Heart left ventricle (tissue), 16 donors: ENCODE measurements at regions of chr10 and their contacts with region 1.

Region 1: DNA sequence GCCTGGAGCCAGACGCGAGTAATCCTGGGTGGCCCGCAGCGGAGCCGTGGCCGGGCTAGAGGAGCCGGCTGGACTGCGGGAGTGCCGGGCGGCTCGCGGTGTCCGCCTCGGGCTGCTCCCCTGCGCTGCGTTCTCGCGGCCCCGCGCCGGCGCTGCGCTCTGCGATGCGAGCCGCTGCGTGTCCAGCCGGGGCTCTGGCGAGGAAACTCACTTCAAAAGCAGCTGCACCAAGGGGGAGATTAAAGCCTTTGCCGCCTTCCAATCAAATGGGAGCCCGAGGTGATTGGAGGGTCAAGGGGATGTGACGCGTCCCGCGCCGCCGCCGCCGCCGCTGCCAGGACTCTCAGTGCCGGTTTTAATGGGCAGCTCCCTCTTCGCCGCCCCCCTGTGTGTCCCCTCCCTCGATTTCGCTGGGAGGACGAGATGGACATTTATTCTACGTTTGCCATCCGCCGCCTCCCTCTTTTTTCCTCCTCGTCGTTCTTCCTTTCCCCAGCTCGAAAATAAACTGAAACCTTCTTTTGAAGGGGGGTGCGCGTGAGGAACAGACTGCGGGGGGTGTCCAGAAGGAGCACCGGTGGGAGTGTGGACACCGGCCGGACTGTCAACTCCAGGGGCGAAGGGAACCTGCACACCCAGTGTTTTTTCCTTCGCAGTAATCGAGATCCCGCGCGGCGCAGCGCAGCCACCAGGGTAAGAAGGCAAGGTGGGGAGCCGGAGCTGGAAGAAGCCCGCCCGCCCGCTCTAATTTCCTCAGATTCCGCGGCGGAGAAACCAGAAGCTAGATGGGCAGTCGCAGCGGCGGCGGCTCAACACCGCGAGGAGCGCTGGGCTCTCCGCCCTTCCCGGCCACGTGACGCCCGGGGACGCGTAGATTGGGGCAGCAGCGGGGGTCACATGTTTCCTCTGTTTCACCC is at the start of gene ZNF503:
- DNase-seq: peak; percentile 97 to 99 (median 98)
- ATAC-seq: peak; percentile 83 to 92 (median 88)
- H3K4me3 ChIP-seq: peak within 1 kb of the TSS; percentile 74 to 98 (median 92)
- H3K27ac ChIP-seq: peak within 1 kb of the TSS; percentile 81 to 100 (median 97)
- H3K4me1 ChIP-seq: peaks cover 0 to 53% (median 20%) of the 10 kb centered on the region in 12 donors
- H3K27me3 ChIP-seq: peaks cover 0 to 38% (median 0%) of the 10 kb centered on the region in 9 donors
- CTCF ChIP-seq: peak in 7 of 12 donors; percentile 10 to 40 (median 32)
- POLR2A ChIP-seq: peak; percentile 63 to 99
- total RNA-seq, gene ZNF503: 3.4 to 8.6 (median 7.4) TPM

Region 2: GRCh38 chr10:75593692-75594556 is 192.1 kb after region 1 on chr10:
- intact Hi-C with region 1: loop called in 3 of 10 experiments (anchors 5 to 10 kb)
- DNase-seq: no peak
- ATAC-seq: no peak
- H3K4me3 ChIP-seq: no peak overlapping the region
- H3K27ac ChIP-seq: no peak overlapping the region
- H3K4me1 ChIP-seq: peaks cover 0 to 9% (median 2%) of the 10 kb centered on the region in 12 donors
- H3K27me3 ChIP-seq: no peaks in the 10 kb centered on the region
- CTCF ChIP-seq: peak in 2 of 12 donors; percentile 19 to 23
- POLR2A ChIP-seq: no peak

Region 3: DNA sequence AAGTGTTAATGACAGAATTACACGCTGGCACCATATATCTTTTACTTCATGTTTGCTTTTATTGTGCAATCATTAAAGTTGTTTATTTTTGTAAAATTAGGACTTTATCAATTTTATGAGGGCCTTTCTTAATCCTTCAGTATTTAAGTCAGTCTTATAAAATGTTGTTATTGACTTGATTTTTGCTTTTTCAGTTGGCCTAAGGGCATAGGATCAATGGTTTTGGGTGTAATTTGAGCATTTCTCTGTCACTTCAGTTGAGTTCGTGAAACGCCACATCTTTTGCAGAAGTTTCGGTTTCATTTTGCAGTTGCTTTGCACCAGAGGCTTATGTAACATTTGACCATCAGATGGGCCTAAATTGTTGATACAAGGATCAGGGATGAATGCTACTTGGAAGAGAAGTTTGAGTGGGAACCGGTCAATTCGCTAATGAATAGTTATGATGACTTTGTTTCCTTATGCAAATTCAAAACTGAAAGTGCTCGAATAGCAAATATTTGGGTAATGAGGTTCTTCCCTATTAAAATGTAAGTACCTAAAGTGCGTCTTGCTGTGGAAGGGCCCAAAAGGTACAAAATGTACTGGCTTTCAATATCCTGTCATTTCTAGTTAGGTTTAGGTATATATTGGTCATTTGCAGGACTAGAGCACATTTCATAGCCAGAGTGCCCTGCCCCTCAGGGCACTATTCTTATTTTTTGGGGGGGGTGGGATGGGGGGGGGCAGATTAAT is 370.5 kb after region 1 on chr10:
- intact Hi-C with region 1: loop called in 7 of 10 experiments (anchors 5 to 10 kb)
- DNase-seq: no peak
- ATAC-seq: peak in 1 of 4 donors; percentile 18
- H3K4me3 ChIP-seq: peak overlapping the region in 10 of 12 donors; percentile 15 to 50 (median 36)
- H3K27ac ChIP-seq: peak overlapping the region; percentile 32 to 80 (median 50)
- H3K4me1 ChIP-seq: peaks cover 0 to 46% (median 16%) of the 10 kb centered on the region in 12 donors
- H3K27me3 ChIP-seq: no peaks in the 10 kb centered on the region
- CTCF ChIP-seq: no peak
- POLR2A ChIP-seq: no peak

Region 4: GRCh38 chr10:76036111-76036940 is 634.5 kb after region 1 on chr10:
- intact Hi-C with region 1: loop called in 9 of 10 experiments (anchors 1 to 5 kb)
- DNase-seq: peak; percentile 72 to 86 (median 74)
- ATAC-seq: peak; percentile 79 to 94 (median 90)
- H3K4me3 ChIP-seq: peak overlapping the region in 6 of 12 donors; percentile 25 to 49 (median 38)
- H3K27ac ChIP-seq: peak overlapping the region in 1 of 12 donors; percentile 14
- H3K4me1 ChIP-seq: peaks cover 0 to 19% (median 7%) of the 10 kb centered on the region in 12 donors
- H3K27me3 ChIP-seq: no peaks in the 10 kb centered on the region
- CTCF ChIP-seq: peak; percentile 86 to 97 (median 94)
- POLR2A ChIP-seq: no peak

Region 5: DNA sequence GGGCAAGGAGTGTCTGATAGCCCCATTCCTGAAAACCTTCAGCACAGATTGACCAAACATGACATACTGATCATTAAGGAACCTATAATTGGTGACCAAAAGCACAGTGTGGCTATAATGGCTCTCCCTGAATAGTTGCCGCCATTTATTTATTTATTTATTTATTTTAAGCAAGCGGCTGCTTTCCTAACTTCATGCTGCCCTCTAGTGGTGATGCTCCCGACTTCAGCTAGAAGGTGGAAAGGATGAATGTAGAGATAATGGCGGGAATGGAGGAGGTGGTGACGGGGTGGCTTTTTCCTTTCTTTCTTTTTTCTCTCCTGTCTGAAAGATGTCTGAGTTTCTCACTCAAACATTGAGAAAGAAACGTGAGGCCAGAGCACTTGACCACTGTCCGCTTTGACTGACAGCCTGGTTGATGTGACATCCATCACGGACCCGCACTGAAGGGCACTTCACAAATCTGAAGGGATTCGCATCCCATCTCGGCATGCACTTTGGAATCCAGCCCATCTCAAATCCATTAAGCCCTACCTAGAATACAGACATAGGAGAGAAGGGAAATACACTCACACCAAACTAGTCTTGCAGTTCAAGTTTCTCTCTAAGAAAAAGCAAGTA is 1145.6 kb after region 1 on chr10:
- intact Hi-C with region 1: loop called (anchors 2 to 10 kb)
- DNase-seq: peak in 4 of 5 donors; percentile 67 to 87 (median 81)
- ATAC-seq: peak; percentile 52 to 86 (median 64)
- H3K4me3 ChIP-seq: no peak overlapping the region
- H3K27ac ChIP-seq: no peak overlapping the region
- H3K4me1 ChIP-seq: peaks cover 0 to 19% (median 1%) of the 10 kb centered on the region in 12 donors
- H3K27me3 ChIP-seq: no peaks in the 10 kb centered on the region
- CTCF ChIP-seq: peak; percentile 77 to 89 (median 85)
- POLR2A ChIP-seq: no peak